Posterior cingulate gyrus (tissue), 11 donors: ENCODE measurements at regions of chr21 and their contacts with region 1.

Region 1: DNA sequence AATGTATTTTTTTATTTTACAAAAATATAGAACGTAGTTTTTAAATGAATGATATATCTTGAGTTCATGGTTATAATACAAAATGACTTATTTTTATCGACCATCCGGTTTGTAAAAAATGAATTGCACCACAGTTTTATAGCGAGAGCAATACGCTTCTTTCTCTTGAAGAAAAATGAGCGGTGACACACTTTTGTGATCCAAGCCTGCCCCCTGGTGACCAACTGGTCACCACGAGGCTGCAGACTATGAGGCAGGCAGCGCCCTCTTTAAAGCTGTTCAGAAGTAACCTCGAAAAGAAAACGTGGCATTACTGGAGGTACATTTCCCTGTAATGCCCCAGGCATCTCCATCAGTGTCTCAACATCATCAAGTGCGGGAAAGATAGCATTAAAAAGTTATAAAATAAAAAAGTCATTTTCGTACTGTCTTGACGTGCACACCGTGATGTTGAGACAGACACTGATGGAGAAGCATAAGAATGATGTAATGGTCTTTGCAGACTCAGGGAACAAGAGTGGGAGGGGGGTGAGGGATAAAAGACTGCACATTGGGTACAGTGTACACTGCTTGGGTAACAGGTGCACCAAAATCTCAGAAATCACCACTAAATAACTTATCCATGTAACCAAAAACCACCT is 734.2 kb upstream of the ADAMTS5 start:
- DNase-seq: peak; percentile 62 to 97 (median 86)

Region 2: GRCh38 chr21:27759091-27759659 is 58.1 kb after region 1 on chr21:
- intact Hi-C with region 1: no loop called
- DNase-seq: peak in 5 of 10 donors; percentile 9 to 75 (median 68)

Region 3: GRCh38 chr21:27802816-27803475 is 101.9 kb after region 1 on chr21:
- intact Hi-C with region 1: loop called (anchors 10 kb)
- DNase-seq: peak in 5 of 10 donors; percentile 11 to 66 (median 43)

Region 4: DNA sequence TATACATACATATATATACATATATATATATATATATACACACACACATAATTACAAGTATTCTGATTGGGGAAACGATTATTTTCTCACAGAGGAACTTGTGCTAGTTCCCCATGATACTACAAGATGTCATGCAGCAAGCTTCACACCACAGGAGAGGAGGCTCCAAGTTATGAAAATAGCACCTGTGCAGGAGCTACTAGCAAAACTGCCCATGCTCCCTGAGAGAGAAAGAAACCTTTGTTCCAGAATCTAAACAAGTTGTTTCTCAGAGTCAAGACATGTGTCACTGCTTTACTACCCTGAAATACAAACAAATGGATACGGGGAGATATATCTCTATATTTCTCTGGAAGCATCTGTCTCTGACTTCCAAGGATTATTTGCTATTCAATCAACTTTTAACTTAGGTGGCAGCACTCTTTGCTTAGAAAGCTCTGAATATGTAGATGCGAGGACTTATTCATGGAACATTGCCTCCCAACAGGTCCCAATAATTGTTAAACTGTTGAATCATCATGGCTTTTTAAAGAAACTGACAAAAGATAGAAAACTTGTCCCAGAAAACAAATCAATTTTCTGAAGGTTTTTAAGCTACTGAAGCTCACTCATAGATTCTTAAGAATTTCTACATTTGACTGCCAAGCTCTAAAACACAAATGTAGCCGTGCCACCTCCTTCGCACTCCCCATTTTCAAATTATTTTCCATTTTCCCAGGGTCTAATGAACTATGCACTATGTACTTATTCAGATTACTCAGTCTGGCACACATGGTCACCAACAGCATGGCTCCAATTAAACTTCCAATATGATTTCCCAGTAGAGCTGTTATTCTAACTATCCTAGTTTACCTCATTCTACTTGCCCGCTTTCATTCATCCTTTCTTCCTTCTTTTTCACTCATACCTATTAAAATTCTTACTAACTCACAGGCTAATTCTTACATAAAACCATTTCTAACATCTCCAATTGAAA is 362.4 kb after region 1 on chr21:
- intact Hi-C with region 1: loop called (anchors 10 kb)
- DNase-seq: no peak

Region 5: GRCh38 chr21:28336314-28336713 is 635.2 kb after region 1 on chr21:
- intact Hi-C with region 1: loop called (anchors 2 kb)
- DNase-seq: no peak

Region 6: GRCh38 chr21:28745131-28746016 is 1044.3 kb after region 1 on chr21:
- intact Hi-C with region 1: loop called (anchors 5 kb)
- DNase-seq: peak; percentile 47 to 94 (median 76)